B cell (primary cell): ENCODE measurements at regions of chr12 and their contacts with region 1.

Region 1: GRCh38 chr12:104108755-104109445 is 29.1 kb downstream of the NFYB start:
- DNase-seq: peak; percentile 82
- ATAC-seq: peak; percentile 91
- H3K4me3 ChIP-seq: no peak overlapping the region
- H3K4me3 Mint-ChIP-seq: no peak overlapping the region
- H3K27ac ChIP-seq: no peak overlapping the region
- H3K27ac Mint-ChIP-seq: peak overlapping the region; percentile 44
- H3K4me1 ChIP-seq: peaks cover 6 to 8% of the 10 kb centered on the region in 2 donors
- H3K4me1 Mint-ChIP-seq: peaks cover 8% of the 10 kb centered on the region
- H3K27me3 ChIP-seq: no peaks in the 10 kb centered on the region
- H3K27me3 Mint-ChIP-seq: no peaks in the 10 kb centered on the region
- CTCF ChIP-seq: peak; percentile 95

Region 2: DNA sequence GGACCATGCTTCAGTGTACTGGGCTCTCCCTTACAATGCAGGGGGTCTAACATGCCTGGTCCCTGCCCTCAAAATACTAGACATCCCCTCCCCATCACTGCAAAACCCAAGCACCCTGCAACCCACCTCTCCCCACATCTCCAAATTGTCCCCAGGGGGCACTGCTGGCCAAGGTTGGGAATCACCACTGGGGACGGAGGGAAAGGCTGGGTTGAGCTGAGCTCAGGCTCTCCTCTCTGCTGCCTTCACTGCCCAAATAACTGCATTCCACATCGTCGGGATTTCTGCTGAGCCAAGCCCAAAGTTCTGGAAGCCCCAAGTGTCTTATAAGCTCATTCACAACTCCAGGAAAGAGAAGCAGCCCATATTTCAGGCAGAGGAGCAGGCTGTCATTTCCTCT is 337.4 kb before region 1 on chr12:
- CTCF ChIA-PET with region 1: interaction called, 11 read pairs
- POLR2A ChIA-PET with region 1: no interaction called
- intact Hi-C with region 1: loop called (anchors 2 kb)
- DNase-seq: peak; percentile 38
- ATAC-seq: peak; percentile 51
- H3K4me3 ChIP-seq: no peak overlapping the region
- H3K4me3 Mint-ChIP-seq: no peak overlapping the region
- H3K27ac ChIP-seq: no peak overlapping the region
- H3K27ac Mint-ChIP-seq: no peak overlapping the region
- H3K4me1 ChIP-seq: no peaks in the 10 kb centered on the region
- H3K4me1 Mint-ChIP-seq: no peaks in the 10 kb centered on the region
- H3K27me3 ChIP-seq: no peaks in the 10 kb centered on the region
- H3K27me3 Mint-ChIP-seq: no peaks in the 10 kb centered on the region
- CTCF ChIP-seq: peak; percentile 35

Region 3: DNA sequence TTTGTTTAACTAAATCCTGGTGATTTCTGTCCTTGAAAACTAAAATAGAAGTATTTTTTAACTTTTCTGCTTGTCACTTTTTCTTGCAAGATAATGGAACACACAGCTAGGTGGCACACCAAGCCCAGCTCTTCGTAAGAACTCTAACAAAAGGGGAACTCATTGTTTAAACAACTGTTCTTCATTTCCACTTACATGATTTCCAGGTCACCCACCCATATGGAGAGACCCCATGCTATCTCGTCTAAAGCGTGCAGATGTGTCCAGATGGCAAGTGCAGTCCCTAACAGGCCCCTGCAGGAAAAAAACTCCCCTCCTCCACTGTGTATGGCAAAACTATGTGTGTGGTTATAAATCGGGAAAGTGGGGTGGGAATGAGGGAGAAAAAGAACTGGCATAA is 224.6 kb before region 1 on chr12:
- CTCF ChIA-PET with region 1: interaction called, 46 read pairs
- POLR2A ChIA-PET with region 1: no interaction called
- intact Hi-C with region 1: no loop called
- DNase-seq: peak; percentile 55
- ATAC-seq: peak; percentile 56
- H3K4me3 ChIP-seq: no peak overlapping the region
- H3K4me3 Mint-ChIP-seq: no peak overlapping the region
- H3K27ac ChIP-seq: no peak overlapping the region
- H3K27ac Mint-ChIP-seq: no peak overlapping the region
- H3K4me1 ChIP-seq: peaks cover 11 to 15% of the 10 kb centered on the region in 2 donors
- H3K4me1 Mint-ChIP-seq: peaks cover 22% of the 10 kb centered on the region
- H3K27me3 ChIP-seq: no peaks in the 10 kb centered on the region
- H3K27me3 Mint-ChIP-seq: no peaks in the 10 kb centered on the region
- CTCF ChIP-seq: peak; percentile 65

Region 4: GRCh38 chr12:104064031-104064822 is 44.7 kb before region 1 on chr12 and contains the start of gene HCFC2:
- CTCF ChIA-PET with region 1: interaction called, 98 read pairs
- POLR2A ChIA-PET with region 1: no interaction called
- intact Hi-C with region 1: no loop called
- DNase-seq: peak; percentile 94
- ATAC-seq: peak; percentile 92
- H3K4me3 ChIP-seq: peak within 1 kb of the TSS; percentile 80 to 95 (median 85)
- H3K4me3 Mint-ChIP-seq: peak within 1 kb of the TSS; percentile 94
- H3K27ac ChIP-seq: peak within 1 kb of the TSS; percentile 36 to 79
- H3K27ac Mint-ChIP-seq: peak within 1 kb of the TSS; percentile 93
- H3K4me1 ChIP-seq: peaks cover 10 to 14% of the 10 kb centered on the region in 2 donors
- H3K4me1 Mint-ChIP-seq: peaks cover 17% of the 10 kb centered on the region
- H3K27me3 ChIP-seq: no peaks in the 10 kb centered on the region
- H3K27me3 Mint-ChIP-seq: peaks cover 9% of the 10 kb centered on the region
- CTCF ChIP-seq: no peak
- total RNA-seq, gene HCFC2: 10.5 and 11.6 TPM in 2 replicates

Region 5: GRCh38 chr12:104094284-104094683 is 14.6 kb before region 1 on chr12:
- CTCF ChIA-PET with region 1: interaction called, 15 read pairs
- POLR2A ChIA-PET with region 1: no interaction called
- intact Hi-C with region 1: no loop called
- DNase-seq: no peak
- ATAC-seq: no peak
- H3K4me3 ChIP-seq: no peak overlapping the region
- H3K4me3 Mint-ChIP-seq: no peak overlapping the region
- H3K27ac ChIP-seq: no peak overlapping the region
- H3K27ac Mint-ChIP-seq: no peak overlapping the region
- H3K4me1 ChIP-seq: no peaks in the 10 kb centered on the region
- H3K4me1 Mint-ChIP-seq: no peaks in the 10 kb centered on the region
- H3K27me3 ChIP-seq: no peaks in the 10 kb centered on the region
- H3K27me3 Mint-ChIP-seq: no peaks in the 10 kb centered on the region
- CTCF ChIP-seq: no peak

Region 6: GRCh38 chr12:104137913-104138796 is 29.3 kb after region 1 on chr12 and contains the start of gene NFYB:
- CTCF ChIA-PET with region 1: interaction called, 14 read pairs
- POLR2A ChIA-PET with region 1: no interaction called
- intact Hi-C with region 1: no loop called
- DNase-seq: peak; percentile 96
- ATAC-seq: peak; percentile 94
- H3K4me3 ChIP-seq: peak within 1 kb of the TSS; percentile 52 to 73 (median 67)
- H3K4me3 Mint-ChIP-seq: peak within 1 kb of the TSS; percentile 93
- H3K27ac ChIP-seq: peak within 1 kb of the TSS; percentile 43 to 70
- H3K27ac Mint-ChIP-seq: peak within 1 kb of the TSS; percentile 92
- H3K4me1 ChIP-seq: peaks cover 24 to 25% of the 10 kb centered on the region in 2 donors
- H3K4me1 Mint-ChIP-seq: peaks cover 16% of the 10 kb centered on the region
- H3K27me3 ChIP-seq: no peaks in the 10 kb centered on the region
- H3K27me3 Mint-ChIP-seq: no peaks in the 10 kb centered on the region
- CTCF ChIP-seq: no peak
- total RNA-seq, gene NFYB: 20.2 and 27.2 TPM in 2 replicates

Region 7: DNA sequence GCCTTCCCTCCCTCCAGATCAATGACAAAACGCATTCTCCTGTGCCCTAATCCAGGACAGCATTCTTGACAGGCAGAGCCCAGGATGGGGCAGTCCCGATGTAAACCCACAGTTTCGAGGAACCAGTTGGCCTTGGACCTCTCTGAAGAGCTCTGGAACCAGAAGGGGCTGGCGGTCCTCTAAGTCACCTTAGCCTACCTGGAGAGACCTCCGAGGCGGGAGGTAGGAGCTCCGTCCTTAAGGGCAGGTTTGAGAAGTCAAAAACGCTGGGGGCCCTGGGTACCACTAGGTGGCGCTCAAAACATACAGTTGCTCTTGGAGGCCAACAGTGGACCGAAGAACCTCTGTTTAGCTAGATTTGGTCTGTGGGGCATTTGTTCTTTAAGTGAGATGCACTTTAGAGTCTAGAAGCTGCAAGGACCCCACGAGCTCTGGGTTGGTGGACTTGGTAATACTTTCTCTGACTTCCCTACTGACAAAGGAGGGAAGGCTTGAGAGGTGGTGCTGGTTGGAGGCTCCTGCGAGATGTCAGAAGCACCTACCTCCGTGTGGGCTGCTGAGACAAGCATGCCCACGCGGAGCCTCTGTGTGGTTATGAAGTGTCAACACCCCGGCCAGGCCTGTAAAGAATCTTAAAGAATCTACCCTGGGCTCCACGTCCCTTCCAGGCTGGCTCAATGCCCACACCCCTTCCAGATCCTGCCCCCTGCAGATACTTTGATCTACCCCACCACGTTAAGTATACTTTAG is 273.0 kb after region 1 on chr12:
- CTCF ChIA-PET with region 1: no interaction called
- POLR2A ChIA-PET with region 1: no interaction called
- intact Hi-C with region 1: no loop called
- DNase-seq: peak; percentile 90
- ATAC-seq: peak; percentile 90
- H3K4me3 ChIP-seq: no peak overlapping the region
- H3K4me3 Mint-ChIP-seq: no peak overlapping the region
- H3K27ac ChIP-seq: no peak overlapping the region
- H3K27ac Mint-ChIP-seq: peak overlapping the region; percentile 1
- H3K4me1 ChIP-seq: peaks cover 3 to 9% of the 10 kb centered on the region in 2 donors
- H3K4me1 Mint-ChIP-seq: peaks cover 9% of the 10 kb centered on the region
- H3K27me3 ChIP-seq: peaks cover 0 to 4% (median 2%) of the 10 kb centered on the region in 4 experiments
- H3K27me3 Mint-ChIP-seq: peaks cover 6% of the 10 kb centered on the region
- CTCF ChIP-seq: peak; percentile 95